PC-3 (cell line): ENCODE measurements at regions of chr12 and their contacts with region 1.

Region 1: DNA sequence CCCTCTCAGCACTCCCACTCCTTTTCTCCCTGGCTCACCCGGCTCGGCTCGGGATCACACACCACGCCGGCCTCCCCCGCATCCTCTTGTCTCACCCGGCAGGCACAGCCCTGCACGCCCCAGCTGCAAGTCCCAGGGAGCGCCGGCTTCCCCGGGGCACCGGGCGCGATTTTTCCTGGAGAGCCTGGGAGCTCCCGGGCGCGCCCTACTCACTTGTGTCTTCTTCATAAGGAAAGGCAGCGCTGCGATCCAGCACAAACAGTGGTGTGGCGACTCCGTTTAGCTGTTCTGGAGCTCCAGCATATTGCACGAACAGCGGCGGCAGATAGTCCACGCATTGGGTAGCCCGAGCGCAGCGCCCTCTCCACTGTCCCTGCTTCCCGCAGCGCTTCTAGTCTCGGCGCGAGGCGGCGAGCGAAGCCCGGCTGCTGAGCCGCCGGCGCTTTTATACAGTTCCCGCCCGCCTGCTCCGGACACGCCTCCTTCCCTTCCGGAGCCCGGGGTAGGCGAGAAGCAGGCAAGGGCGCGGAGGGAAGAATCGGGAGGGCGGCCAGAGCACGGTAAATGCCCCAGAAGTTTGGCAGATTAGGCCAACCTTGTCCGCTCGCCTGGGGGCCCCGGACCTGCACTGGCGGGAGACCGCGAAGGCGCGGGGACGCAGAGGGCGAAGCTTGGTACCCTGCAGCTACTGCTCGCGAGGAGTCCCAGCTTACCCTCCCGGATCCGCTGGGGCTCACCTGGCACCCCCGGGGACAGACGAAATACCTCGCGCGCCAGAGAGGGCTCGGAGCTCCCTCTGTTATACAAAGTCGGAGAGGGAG is at the start of gene KITLG:
- DNase-seq: peak; percentile 91
- ATAC-seq: peak; percentile 77
- H3K4me3 ChIP-seq: peak within 1 kb of the TSS; percentile 94
- H3K27ac ChIP-seq: peak within 1 kb of the TSS; percentile 24
- H3K4me1 ChIP-seq: peaks cover 37% of the 10 kb centered on the region
- H3K27me3 ChIP-seq: no peaks in the 10 kb centered on the region
- CTCF ChIP-seq: peak; percentile 38; the same call in 1 of the 2 replicates
- total RNA-seq, gene KITLG: 8.4 and 14.9 TPM in 2 replicates

Region 2: DNA sequence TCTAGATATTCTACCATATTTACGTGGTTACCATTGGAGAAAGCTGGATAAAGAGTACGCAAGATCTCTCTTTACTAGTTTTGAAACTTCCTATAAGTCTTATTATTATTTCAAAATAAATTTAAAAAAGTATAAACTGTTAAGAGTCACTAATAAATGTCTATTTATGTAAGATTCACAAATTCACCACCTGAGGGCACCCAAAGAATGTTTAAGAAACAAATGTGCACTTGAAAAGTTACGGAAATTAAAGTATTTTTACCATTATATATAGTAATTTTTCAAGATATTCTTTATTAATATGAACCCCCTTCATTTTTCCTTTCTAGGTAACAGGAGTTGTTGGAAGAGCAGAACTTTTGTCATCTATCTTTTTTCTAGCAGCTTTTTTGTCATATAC is 426.3 kb before region 1 on chr12:
- CTCF ChIA-PET with region 1: interaction called, 3 read pairs
- POLR2A ChIA-PET with region 1: no interaction called
- intact Hi-C with region 1: loop called (anchors 1 kb)
- DNase-seq: peak; percentile 65
- ATAC-seq: no peak
- H3K4me3 ChIP-seq: no peak overlapping the region
- H3K27ac ChIP-seq: no peak overlapping the region
- H3K4me1 ChIP-seq: no peaks in the 10 kb centered on the region
- H3K27me3 ChIP-seq: no peaks in the 10 kb centered on the region
- CTCF ChIP-seq: peak; percentile 50

Region 3: GRCh38 chr12:88371416-88372183 is 208.7 kb before region 1 on chr12:
- CTCF ChIA-PET with region 1: no interaction called
- POLR2A ChIA-PET with region 1: no interaction called
- intact Hi-C with region 1: no loop called
- DNase-seq: peak; percentile 9
- ATAC-seq: no peak
- H3K4me3 ChIP-seq: no peak overlapping the region
- H3K27ac ChIP-seq: no peak overlapping the region
- H3K4me1 ChIP-seq: no peaks in the 10 kb centered on the region
- H3K27me3 ChIP-seq: no peaks in the 10 kb centered on the region
- CTCF ChIP-seq: no peak

Region 4: DNA sequence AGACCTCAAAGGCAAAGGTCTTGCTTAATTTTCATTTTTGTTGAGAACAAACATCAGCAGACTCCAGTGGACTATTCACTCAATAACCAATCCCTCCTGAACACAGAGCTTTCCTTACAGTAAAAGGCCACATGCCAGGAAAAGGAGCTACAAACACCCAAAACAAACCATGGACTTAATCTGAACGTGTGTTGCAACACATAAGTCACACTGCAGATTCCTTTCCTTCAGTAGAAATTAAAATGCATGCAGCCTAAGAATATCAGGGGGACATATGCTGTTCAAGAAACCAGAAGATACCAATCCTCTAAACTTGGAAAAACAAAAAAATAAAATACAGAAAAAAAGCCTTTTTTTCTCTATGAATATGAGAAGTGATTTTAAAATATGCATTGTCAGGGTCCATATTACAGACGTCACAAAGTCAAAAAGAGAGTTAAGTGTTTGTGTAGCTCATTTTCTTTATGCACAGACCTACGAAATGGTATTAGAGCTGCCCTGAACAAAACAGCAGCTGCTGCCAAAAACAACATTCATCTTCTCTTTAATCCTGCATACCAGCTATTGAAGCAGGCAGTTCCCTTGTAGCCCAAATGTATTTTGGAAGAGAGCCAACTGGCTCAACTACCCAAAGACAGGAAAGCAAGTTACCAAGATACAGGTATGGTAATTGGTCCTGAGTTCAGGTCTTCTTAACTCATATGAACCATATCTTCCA is 26.2 kb before region 1 on chr12:
- CTCF ChIA-PET with region 1: interaction called, 6 read pairs
- POLR2A ChIA-PET with region 1: interaction called, 7 read pairs
- intact Hi-C with region 1: loop called (anchors 2 kb)
- DNase-seq: peak; percentile 92
- ATAC-seq: peak; percentile 44
- H3K4me3 ChIP-seq: no peak overlapping the region
- H3K27ac ChIP-seq: peak overlapping the region; percentile 83
- H3K4me1 ChIP-seq: peaks cover 38% of the 10 kb centered on the region
- H3K27me3 ChIP-seq: no peaks in the 10 kb centered on the region
- CTCF ChIP-seq: no peak

Region 5: GRCh38 chr12:88658009-88658408 is 77.7 kb after region 1 on chr12:
- CTCF ChIA-PET with region 1: interaction called, 4 read pairs
- POLR2A ChIA-PET with region 1: no interaction called
- intact Hi-C with region 1: loop called (anchors 5 kb)
- DNase-seq: peak; percentile 86
- ATAC-seq: peak; percentile 84
- H3K4me3 ChIP-seq: no peak overlapping the region
- H3K27ac ChIP-seq: peak overlapping the region; percentile 75
- H3K4me1 ChIP-seq: peaks cover 25% of the 10 kb centered on the region
- H3K27me3 ChIP-seq: no peaks in the 10 kb centered on the region
- CTCF ChIP-seq: no peak

Region 6: GRCh38 chr12:88922816-88923215 is 342.6 kb after region 1 on chr12:
- CTCF ChIA-PET with region 1: no interaction called
- POLR2A ChIA-PET with region 1: no interaction called
- intact Hi-C with region 1: loop called (anchors 10 kb)
- DNase-seq: no peak
- ATAC-seq: no peak
- H3K4me3 ChIP-seq: no peak overlapping the region
- H3K27ac ChIP-seq: no peak overlapping the region
- H3K4me1 ChIP-seq: peaks cover 45% of the 10 kb centered on the region
- H3K27me3 ChIP-seq: no peaks in the 10 kb centered on the region
- CTCF ChIP-seq: no peak

Region 7: DNA sequence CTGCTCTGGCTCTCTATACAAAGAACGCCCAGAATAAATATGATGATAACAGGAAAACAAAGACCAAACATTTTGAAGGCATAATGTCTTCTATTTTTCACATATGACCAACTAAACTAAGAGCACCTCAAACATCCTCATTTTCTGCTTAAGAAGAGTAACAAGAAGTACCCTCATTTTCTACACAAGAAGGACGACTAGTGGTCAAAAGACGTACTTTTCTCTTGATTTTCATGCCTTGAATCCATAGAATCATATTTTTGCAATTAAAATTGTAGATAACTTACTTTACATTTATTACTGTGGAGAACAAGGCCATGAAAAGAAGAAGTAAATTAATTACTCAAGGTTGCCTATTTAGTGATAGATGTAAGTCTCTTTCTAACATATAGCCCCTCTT is 413.4 kb after region 1 on chr12:
- CTCF ChIA-PET with region 1: interaction called, 12 read pairs
- POLR2A ChIA-PET with region 1: no interaction called
- intact Hi-C with region 1: loop called (anchors 1 kb)
- DNase-seq: peak; percentile 80
- ATAC-seq: peak; percentile 77
- H3K4me3 ChIP-seq: no peak overlapping the region
- H3K27ac ChIP-seq: no peak overlapping the region
- H3K4me1 ChIP-seq: peaks cover 11% of the 10 kb centered on the region
- H3K27me3 ChIP-seq: no peaks in the 10 kb centered on the region
- CTCF ChIP-seq: peak; percentile 87